Naive thymus-derived CD8-positive, alpha-beta T cell (primary cell): ENCODE measurements at regions of chr6 and their contacts with region 1.

Region 1: DNA sequence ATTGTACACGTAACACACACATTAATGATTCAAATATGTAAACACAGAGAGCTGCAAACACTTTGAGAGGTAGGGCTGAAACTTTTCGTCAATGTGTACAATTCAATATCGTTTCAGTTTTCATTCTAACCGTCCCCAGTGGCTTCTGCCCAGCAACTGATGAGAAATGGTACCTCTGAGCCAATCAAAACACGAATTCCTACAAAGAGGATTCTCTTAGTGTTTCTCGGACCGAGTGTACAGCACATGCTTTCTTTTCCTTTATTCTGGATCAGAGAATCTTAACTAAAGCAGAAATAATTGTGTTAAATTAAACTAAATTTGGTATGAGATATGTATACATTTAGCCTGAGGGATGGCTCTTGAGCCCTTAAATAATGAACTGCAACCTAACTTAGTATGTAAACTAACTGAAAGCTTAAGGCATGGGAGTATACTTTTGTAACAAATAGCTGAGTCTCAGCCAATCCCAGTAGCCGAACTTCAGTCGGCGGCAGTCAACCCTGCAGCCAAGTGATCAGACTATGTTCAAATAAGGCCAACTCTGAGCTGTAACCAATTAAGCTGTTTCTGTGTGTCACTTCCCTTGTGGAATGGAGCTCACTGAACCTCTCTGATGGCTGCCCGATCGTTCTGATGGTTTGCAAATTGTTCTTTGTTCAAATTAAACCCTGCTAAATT is 16.1 kb downstream of the BTN2A1 start:
- DNase-seq: peak; percentile 48 to 96 (median 84)
- ATAC-seq: peak; percentile 95
- H3K4me3 Mint-ChIP-seq: peak overlapping the region; percentile 92 to 100 (median 98)
- H3K27ac Mint-ChIP-seq: peak overlapping the region; percentile 96 to 100 (median 99)
- H3K4me1 Mint-ChIP-seq: peaks cover 25 to 76% (median 64%) of the 10 kb centered on the region in 4 donors
- H3K27me3 Mint-ChIP-seq: no peaks in the 10 kb centered on the region

Region 2: DNA sequence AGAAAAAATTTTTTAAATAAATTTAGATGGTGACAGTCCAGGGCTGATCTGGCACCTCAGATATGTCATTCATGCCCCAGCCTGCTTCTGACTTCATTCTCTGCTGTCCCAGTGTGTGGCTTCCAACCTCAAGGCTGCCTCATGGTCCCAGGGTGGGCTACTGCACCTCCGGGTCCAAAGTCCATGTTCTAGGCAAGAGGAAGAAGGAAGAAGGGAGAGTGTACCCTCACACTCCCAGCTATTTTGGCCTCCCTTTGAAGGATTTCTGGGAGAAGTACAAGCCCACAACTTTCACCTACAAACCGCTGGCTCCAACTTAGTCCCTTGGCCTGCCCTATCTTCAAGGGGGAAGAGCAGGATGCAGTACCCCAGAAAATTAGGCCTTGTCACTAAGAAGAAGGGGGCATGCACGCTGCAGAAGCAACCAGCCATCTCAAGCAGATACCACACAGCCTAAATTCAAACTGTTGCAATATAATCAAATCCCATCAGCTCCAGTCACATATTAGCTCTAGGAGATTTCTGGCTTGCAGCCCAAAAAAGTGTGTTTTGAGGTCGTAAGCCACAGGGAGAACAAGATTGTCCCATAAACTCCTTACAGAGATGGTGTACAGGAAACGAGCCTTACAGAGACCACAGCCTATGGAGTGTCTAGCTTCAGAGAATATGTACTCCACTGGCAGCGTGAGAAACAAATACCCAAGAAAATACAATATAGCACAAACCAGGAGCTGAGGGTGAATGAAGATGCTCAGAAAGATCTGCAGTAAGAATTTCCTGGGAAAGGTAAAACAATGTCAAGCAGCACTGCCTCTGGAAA is 109.8 kb before region 1 on chr6:
- POLR2A ChIA-PET with region 1: interaction called, 12 read pairs
- DNase-seq: peak in 4 of 10 donors; percentile 17 to 61 (median 48)
- ATAC-seq: peak; percentile 26 to 38
- H3K4me3 Mint-ChIP-seq: no peak overlapping the region
- H3K27ac Mint-ChIP-seq: no peak overlapping the region
- H3K4me1 Mint-ChIP-seq: peaks cover 41 to 56% (median 51%) of the 10 kb centered on the region in 4 donors
- H3K27me3 Mint-ChIP-seq: no peaks in the 10 kb centered on the region

Region 3: GRCh38 chr6:26485112-26485780 is 11.3 kb after region 1 on chr6:
- POLR2A ChIA-PET with region 1: interaction called, 13 read pairs
- DNase-seq: no peak
- ATAC-seq: no peak
- H3K4me3 Mint-ChIP-seq: no peak overlapping the region
- H3K27ac Mint-ChIP-seq: no peak overlapping the region
- H3K4me1 Mint-ChIP-seq: peaks cover 0 to 2% (median 0%) of the 10 kb centered on the region in 4 donors
- H3K27me3 Mint-ChIP-seq: no peaks in the 10 kb centered on the region

Region 4: GRCh38 chr6:26520853-26521599 is 47.1 kb after region 1 on chr6:
- POLR2A ChIA-PET with region 1: interaction called, 17 read pairs
- DNase-seq: peak; percentile 76 to 92 (median 86)
- ATAC-seq: peak; percentile 70 to 82
- H3K4me3 Mint-ChIP-seq: peak overlapping the region; percentile 73 to 97 (median 89)
- H3K27ac Mint-ChIP-seq: peak overlapping the region; percentile 67 to 98 (median 91)
- H3K4me1 Mint-ChIP-seq: peaks cover 13 to 41% (median 34%) of the 10 kb centered on the region in 4 donors
- H3K27me3 Mint-ChIP-seq: peaks cover 0 to 3% (median 0%) of the 10 kb centered on the region in 5 donors

Region 5: DNA sequence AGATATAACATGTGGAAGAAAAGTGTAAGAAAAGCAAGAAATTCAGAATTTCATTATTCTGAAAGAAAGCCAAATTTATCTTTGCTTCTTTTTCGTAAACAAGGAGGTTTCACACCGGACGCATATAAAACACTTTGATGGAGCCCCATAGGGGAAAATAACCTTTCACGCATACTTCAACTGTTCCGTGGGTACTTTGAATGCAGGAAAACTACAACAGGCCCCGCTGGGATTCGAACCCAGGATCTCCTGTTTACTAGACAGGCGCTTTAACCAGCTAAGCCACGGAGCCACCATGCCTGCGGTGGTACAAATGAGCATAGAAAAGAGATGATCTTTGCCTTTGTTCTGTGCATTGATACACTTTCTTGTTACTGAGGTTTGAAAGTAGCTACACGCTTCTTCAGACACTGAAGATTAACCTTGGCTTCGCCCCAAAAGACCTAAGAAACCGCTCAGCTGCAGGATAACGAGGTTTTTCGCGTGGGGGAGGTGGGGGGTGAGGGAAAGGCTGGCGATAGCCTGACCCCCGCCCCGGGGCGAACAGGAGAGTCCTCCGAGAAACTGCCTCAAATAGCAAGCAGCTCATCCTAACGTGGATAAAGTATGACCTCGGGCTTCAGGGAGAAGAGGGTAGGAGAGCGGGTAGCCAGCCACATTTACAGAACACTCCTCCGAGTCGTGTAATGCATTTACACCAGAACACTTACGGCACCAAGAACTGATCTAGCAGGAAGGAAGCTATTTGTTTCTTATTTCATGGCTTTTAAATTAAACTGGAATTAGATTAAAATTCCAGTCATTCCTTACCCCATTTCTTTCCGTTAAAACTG is 59.0 kb after region 1 on chr6:
- POLR2A ChIA-PET with region 1: interaction called, 55 read pairs
- DNase-seq: peak; percentile 68 to 97 (median 94)
- ATAC-seq: peak; percentile 49 to 51
- H3K4me3 Mint-ChIP-seq: peak overlapping the region; percentile 91 to 99 (median 97)
- H3K27ac Mint-ChIP-seq: peak overlapping the region; percentile 91 to 99 (median 94)
- H3K4me1 Mint-ChIP-seq: peaks cover 36 to 67% (median 62%) of the 10 kb centered on the region in 4 donors
- H3K27me3 Mint-ChIP-seq: peaks cover 0 to 12% (median 0%) of the 10 kb centered on the region in 5 donors

Region 6: DNA sequence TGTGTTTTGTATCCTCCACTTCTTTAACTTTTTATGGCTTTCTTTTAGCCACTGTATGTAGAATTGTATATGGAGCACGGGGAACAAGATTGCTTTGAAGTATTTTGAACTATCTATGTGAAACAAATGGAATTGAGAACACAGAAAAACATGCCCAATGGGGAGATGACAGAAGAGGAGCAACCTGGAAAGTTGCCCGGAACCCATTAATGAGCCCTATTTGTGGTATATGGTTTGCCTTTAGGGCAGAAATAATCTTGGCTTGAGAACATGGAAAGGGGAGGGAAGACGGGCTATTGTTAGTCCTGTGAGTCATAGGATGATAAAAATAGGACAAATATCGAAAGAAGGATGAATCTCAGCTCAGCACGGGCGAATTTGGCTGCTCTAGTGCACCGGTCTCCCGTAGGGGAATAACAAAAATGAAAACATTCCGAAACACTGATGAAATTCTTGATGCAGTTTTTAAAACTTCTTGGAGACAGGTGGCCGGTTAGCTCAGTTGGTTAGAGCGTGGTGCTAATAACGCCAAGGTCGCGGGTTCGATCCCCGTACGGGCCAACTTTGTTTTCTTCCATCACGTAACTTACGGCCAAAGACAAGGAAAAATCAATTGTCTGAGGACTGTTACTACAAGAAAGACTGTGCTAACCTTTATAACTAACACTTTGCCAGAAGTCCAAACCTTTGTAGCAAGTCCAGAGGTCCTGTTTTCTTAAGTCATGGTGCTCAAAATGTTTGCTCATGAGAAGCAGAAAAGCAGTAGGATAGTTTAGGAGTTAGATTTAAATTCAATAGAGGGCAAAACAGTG is 79.9 kb after region 1 on chr6:
- POLR2A ChIA-PET with region 1: interaction called, 12 read pairs
- DNase-seq: peak; percentile 49 to 93 (median 77)
- ATAC-seq: peak; percentile 42 to 52
- H3K4me3 Mint-ChIP-seq: no peak overlapping the region
- H3K27ac Mint-ChIP-seq: peak overlapping the region in 1 of 10 donors; percentile 17
- H3K4me1 Mint-ChIP-seq: peaks cover 11 to 26% (median 19%) of the 10 kb centered on the region in 4 donors
- H3K27me3 Mint-ChIP-seq: peaks cover 0 to 2% (median 0%) of the 10 kb centered on the region in 5 donors